PC-3 (cell line): ENCODE measurements at regions of chr14 and their contacts with region 1.

Region 1: DNA sequence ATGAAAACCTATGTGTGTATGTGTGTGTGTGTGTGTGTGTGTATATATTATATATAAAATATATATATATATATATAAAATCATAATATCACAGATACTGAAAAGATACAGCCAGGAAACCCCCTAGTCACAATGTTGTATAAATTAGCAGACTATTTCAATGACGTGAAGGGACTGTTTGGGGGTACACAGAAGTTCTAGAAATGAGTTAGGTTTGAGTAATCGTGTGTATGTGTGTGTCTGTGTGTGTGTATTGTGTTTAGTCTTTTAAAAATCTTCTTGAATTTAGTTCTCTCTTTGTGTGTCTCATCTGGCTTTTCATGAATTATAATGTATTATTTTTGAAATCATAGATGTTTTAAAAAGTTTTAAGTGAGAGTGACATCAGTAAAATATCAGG is 21.9 kb downstream of the ADAM21 start:
- DNase-seq: no peak
- ATAC-seq: no peak
- H3K4me3 ChIP-seq: no peak overlapping the region
- H3K27ac ChIP-seq: no peak overlapping the region
- H3K4me1 ChIP-seq: no peaks in the 10 kb centered on the region
- H3K27me3 ChIP-seq: no peaks in the 10 kb centered on the region
- CTCF ChIP-seq: no peak

Region 2: GRCh38 chr14:70398706-70399431 is 75.0 kb before region 1 on chr14:
- CTCF ChIA-PET with region 1: interaction called, 10 read pairs
- POLR2A ChIA-PET with region 1: no interaction called
- intact Hi-C with region 1: no loop called
- DNase-seq: no peak
- ATAC-seq: no peak
- H3K4me3 ChIP-seq: no peak overlapping the region
- H3K27ac ChIP-seq: no peak overlapping the region
- H3K4me1 ChIP-seq: no peaks in the 10 kb centered on the region; the same call in 1 of the 2 replicates
- H3K27me3 ChIP-seq: no peaks in the 10 kb centered on the region
- CTCF ChIP-seq: no peak

Region 3: DNA sequence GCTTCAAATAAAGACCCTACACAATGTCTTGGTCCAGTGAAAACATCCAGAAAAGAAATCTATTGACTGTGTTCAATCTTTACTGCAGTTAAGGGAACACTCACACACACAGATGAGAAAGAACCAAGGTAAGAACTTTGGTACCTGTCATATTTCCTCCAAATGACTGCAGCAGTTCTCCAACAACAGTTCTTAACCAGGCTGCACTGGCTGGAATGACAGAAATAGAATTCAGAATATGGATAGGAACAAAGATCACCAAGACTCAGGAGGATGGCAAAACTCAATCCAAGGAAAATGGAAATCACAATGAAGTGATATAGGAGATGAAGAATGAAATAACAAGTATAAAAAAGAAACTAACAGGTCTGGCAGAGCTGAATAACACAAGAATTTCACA is 24.4 kb after region 1 on chr14:
- CTCF ChIA-PET with region 1: no interaction called
- POLR2A ChIA-PET with region 1: no interaction called
- intact Hi-C with region 1: no loop called
- DNase-seq: no peak
- ATAC-seq: no peak
- H3K4me3 ChIP-seq: no peak overlapping the region
- H3K27ac ChIP-seq: no peak overlapping the region
- H3K4me1 ChIP-seq: no peaks in the 10 kb centered on the region
- H3K27me3 ChIP-seq: no peaks in the 10 kb centered on the region
- CTCF ChIP-seq: no peak